Transverse colon (tissue), 4 donors: ENCODE measurements at regions of chr19 and their contacts with region 1.

Region 1: DNA sequence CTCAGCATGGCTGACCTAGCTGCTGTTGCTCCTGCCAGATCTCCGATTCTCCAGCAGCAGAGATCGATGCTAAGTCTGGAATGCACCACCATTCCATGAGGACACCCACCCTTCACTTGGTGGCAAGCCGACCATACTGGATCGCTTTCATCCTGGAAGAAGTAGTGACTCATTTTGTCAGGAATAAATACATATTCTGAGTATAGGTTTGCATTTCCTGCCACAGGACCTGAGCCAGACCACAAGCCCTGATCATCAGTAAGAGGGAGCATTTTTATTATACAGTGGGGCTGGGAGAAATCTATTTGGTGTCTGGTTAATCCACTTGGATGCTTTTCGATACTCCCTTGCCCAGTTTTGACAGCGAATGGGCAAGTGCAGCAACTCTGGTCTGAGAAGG is 10.9 kb upstream of the KCTD15 start:
- DNase-seq: no peak
- H3K4me3 ChIP-seq: no peak overlapping the region
- H3K27ac ChIP-seq: no peak overlapping the region
- H3K4me1 ChIP-seq: no peaks in the 10 kb centered on the region
- H3K27me3 ChIP-seq: no peaks in the 10 kb centered on the region
- CTCF ChIP-seq: no peak
- EP300 ChIP-seq: no peak
- POLR2A ChIP-seq: no peak

Region 2: DNA sequence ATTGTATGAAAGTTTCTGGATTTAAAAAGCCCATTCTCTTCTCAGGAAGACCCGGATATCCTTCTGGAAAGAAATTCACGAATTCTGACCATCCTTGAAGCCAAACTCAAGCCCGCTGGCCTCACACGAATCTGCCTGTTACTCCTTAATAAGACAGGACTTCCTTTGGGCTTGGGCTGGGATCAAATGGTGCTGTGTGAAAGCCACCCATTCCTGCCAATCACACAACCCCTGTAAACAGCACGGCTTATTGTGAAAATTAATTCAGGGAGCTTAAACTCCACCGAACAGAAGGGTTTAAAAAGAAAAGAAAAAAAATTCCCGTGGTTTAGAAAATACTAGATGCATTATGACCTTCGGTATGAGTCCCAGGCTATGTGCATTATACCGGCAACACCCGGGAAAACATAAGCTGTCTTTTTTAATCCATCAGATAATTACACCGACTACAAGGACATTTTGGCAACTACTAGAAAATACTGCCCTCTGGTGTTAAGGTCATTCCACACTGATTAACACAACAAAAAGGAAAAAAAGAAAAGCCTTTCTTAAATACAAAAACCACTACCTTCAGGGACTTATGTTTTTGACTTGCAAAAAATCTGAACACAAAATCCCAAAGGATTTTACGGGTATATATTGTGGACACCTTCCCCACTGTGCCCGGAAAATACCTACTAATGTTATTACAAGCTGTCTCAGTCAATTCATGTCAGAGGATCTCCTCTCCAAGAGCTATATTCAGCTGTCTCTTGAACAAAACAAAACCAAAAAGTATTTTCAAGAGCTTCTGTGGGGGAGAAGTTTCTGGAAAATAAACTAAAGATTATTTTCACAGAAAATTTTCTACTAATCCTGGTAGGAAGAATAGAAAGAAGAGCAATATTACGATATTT is 310.5 kb after region 1 on chr19:
- in situ Hi-C with region 1: loop called (anchors 10 kb)
- intact Hi-C with region 1: no loop called
- DNase-seq: no peak
- H3K4me3 ChIP-seq: no peak overlapping the region
- H3K27ac ChIP-seq: no peak overlapping the region
- H3K4me1 ChIP-seq: no peaks in the 10 kb centered on the region
- H3K27me3 ChIP-seq: peaks cover 12% of the 10 kb centered on the region
- CTCF ChIP-seq: peak; percentile 58 to 68 (median 63)
- EP300 ChIP-seq: no peak
- POLR2A ChIP-seq: no peak